ENCODE measurements at regions of chr12 and their contacts with region 1.

Region 1: GRCh38 chr12:115313929-115314328 is 630.0 kb upstream of the TBX3 start:
- DNase-seq: no peak
- ATAC-seq: no peak
- H3K4me3 ChIP-seq: no peak overlapping the region
- H3K27ac ChIP-seq: no peak overlapping the region
- H3K4me1 ChIP-seq: peaks cover 0 to 4% (median 0%) of the 10 kb centered on the region in 9 donors
- H3K27me3 ChIP-seq: peaks cover 0 to 4% (median 0%) of the 10 kb centered on the region in 7 donors
- CTCF ChIP-seq: no peak

Region 2: DNA sequence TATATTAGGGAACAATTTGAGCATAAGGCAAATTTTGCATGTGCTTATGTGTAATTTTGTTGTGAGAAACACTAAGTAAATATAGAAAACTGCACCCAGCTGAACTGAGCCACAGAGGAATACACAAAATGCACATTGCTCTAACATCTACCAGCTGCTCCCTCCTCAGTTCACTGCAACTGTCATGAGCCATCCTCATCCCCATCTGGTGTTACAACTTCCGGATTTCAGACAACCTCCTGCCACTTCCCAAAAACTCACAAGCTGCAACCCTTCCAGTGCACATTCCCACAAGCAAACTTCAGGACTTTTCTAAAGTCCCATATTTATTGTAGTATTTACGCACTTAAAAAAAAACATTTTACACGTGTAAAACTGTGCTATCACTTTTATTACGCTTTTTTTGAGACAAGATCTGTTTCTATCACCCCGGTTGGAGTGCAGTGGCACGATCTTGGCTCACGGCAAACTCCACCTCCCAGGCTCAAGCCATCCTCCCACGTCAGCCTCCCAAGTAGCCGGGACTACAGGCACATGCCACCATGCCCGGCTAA is 460.9 kb before region 1 on chr12:
- intact Hi-C with region 1: loop called in 1 of 10 experiments (anchors 5 kb)
- DNase-seq: peak in 1 of 2 donors; percentile 5
- ATAC-seq: peak in 1 of 8 donors; percentile 59
- H3K4me3 ChIP-seq: no peak overlapping the region
- H3K27ac ChIP-seq: no peak overlapping the region
- H3K4me1 ChIP-seq: peaks cover 0 to 4% (median 0%) of the 10 kb centered on the region in 9 donors
- H3K27me3 ChIP-seq: peaks cover 0 to 12% (median 0%) of the 10 kb centered on the region in 7 donors
- CTCF ChIP-seq: no peak

Region 3: DNA sequence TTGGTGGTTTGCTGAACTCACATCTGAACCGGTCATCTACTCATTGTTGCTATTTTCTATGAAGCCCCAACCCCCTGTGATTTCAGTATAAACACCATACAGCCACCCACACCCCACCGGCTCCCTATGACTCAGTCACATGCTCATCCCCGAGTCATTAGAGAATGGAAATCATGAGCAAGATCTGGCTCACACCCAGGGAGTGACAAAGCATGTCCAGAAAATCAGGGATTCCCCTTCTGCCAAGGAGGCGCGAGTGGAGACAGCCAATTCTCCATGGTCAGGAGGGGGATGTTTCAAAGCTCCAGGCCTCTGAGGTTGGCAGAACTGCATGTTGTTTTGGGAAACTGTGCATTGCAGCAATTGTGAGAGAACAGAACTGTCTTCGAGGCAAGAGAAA is 27.5 kb after region 1 on chr12:
- intact Hi-C with region 1: no loop called
- DNase-seq: peak; percentile 23 to 81
- ATAC-seq: peak; percentile 55 to 82 (median 64)
- H3K4me3 ChIP-seq: no peak overlapping the region
- H3K27ac ChIP-seq: peak overlapping the region in 6 of 10 donors; percentile 21 to 76 (median 50)
- H3K4me1 ChIP-seq: peaks cover 0 to 27% (median 11%) of the 10 kb centered on the region in 9 donors
- H3K27me3 ChIP-seq: no peaks in the 10 kb centered on the region
- CTCF ChIP-seq: no peak